ENCODE measurements at regions of chr14 and their contacts with region 1.

Region 1: GRCh38 chr14:20332788-20333493 is at the start of gene CCNB1IP1:
- DNase-seq: peak in 4 of 5 donors; percentile 70 to 97 (median 86)
- H3K4me3 ChIP-seq: peak within 1 kb of the TSS; percentile 80 to 98 (median 93)
- H3K27ac ChIP-seq: peak within 1 kb of the TSS; percentile 80 to 87
- H3K4me1 ChIP-seq: peaks cover 4 to 6% (median 4%) of the 10 kb centered on the region in 3 donors
- H3K27me3 ChIP-seq: no peaks in the 10 kb centered on the region
- CTCF ChIP-seq: no peak
- total RNA-seq, gene CCNB1IP1: 25.7 TPM

Region 2: DNA sequence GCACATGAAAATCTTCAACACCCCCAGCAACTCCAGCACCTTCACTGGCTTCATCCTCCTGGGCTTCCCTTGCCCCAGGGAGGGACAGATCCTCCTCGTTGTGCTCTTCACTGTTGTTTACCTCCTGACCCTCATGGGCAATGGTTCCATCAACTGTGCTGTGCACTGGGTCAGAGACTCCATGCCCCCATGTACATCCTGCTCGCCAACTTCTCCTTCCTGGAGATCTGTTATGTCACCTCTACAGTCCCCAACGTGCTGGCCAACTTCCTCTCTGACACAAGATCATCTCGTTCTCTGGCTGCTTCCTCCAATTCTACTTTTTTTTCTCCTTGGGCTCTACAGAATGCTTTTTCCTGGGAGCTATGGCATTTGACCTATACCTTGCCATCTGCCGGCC is 153.7 kb before region 1 on chr14:
- intact Hi-C with region 1: no loop called
- DNase-seq: no peak
- H3K4me3 ChIP-seq: no peak overlapping the region
- H3K27ac ChIP-seq: no peak overlapping the region
- H3K4me1 ChIP-seq: no peaks in the 10 kb centered on the region
- H3K27me3 ChIP-seq: no peaks in the 10 kb centered on the region
- CTCF ChIP-seq: no peak

Region 3: GRCh38 chr14:20400965-20401593 is 68.1 kb after region 1 on chr14:
- intact Hi-C with region 1: no loop called
- DNase-seq: no peak
- H3K4me3 ChIP-seq: no peak overlapping the region
- H3K27ac ChIP-seq: no peak overlapping the region
- H3K4me1 ChIP-seq: no peaks in the 10 kb centered on the region
- H3K27me3 ChIP-seq: no peaks in the 10 kb centered on the region
- CTCF ChIP-seq: no peak

Region 4: GRCh38 chr14:20682435-20683124 is 349.6 kb after region 1 on chr14:
- intact Hi-C with region 1: loop called (anchors 10 kb)
- DNase-seq: peak; percentile 89 to 98 (median 96)
- H3K4me3 ChIP-seq: peak overlapping the region; percentile 79 to 94 (median 91)
- H3K27ac ChIP-seq: peak overlapping the region; percentile 98 to 100
- H3K4me1 ChIP-seq: peaks cover 0 to 18% (median 13%) of the 10 kb centered on the region in 3 donors
- H3K27me3 ChIP-seq: no peaks in the 10 kb centered on the region
- CTCF ChIP-seq: no peak

Measured in kidney (tissue), 22 donors.